Activated naive CD4-positive, alpha-beta T cell treated with anti-CD3 and anti-CD28 coated beads for 36 hours (primary cell): ENCODE measurements at regions of chr12 and their contacts with region 1.

Region 1: DNA sequence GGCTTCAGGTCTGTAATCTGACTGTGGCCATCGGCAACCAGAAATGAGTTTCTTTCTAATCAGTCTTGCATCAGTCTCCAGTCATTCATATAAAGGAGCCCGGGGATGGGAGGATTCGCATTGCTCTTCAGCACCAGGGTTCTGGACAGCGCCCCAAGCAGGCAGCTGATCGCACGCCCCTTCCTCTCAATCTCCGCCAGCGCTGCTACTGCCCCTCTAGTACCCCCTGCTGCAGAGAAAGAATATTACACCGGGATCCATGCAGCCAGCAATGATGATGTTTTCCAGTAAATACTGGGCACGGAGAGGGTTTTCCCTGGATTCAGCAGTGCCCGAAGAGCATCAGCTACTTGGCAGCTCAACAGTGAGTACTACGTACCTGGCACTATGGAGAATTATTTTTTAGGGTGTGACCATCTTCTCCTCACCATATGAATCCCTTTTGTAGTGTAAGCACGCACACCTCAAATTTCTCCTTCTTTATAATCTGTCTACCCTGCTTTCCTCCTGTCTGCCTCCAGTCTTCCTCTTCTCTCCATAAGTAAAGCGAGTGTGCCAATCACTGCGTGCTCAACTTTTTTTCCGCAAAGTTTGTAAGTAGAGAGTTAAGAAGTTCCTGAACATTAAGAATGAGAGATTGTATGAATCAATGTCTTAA is at the start of gene TPH2:
- DNase-seq: peak; percentile 70
- H3K4me3 Mint-ChIP-seq: no peak within 1 kb of the TSS
- H3K27ac Mint-ChIP-seq: no peak within 1 kb of the TSS
- H3K4me1 Mint-ChIP-seq: peaks cover 4% of the 10 kb centered on the region
- H3K27me3 Mint-ChIP-seq: peaks cover 41% of the 10 kb centered on the region
- total RNA-seq, gene TPH2: not detected

Region 2: GRCh38 chr12:71415336-71416231 is 523.3 kb before region 1 on chr12:
- CTCF ChIA-PET with region 1: no interaction called
- intact Hi-C with region 1: loop called (anchors 5 kb)
- DNase-seq: peak; percentile 46
- H3K4me3 Mint-ChIP-seq: no peak overlapping the region
- H3K27ac Mint-ChIP-seq: no peak overlapping the region
- H3K4me1 Mint-ChIP-seq: no peaks in the 10 kb centered on the region
- H3K27me3 Mint-ChIP-seq: peaks cover 8% of the 10 kb centered on the region

Region 3: GRCh38 chr12:71685914-71686665 is 252.8 kb before region 1 on chr12 and contains the start of gene TMEM19:
- CTCF ChIA-PET with region 1: no interaction called
- intact Hi-C with region 1: loop called (anchors 5 kb)
- DNase-seq: peak; percentile 81
- H3K4me3 Mint-ChIP-seq: peak within 1 kb of the TSS; percentile 98
- H3K27ac Mint-ChIP-seq: peak within 1 kb of the TSS; percentile 96
- H3K4me1 Mint-ChIP-seq: peaks cover 27% of the 10 kb centered on the region
- H3K27me3 Mint-ChIP-seq: no peaks in the 10 kb centered on the region
- total RNA-seq, gene TMEM19: 10.9 to 11.1 TPM

Region 4: DNA sequence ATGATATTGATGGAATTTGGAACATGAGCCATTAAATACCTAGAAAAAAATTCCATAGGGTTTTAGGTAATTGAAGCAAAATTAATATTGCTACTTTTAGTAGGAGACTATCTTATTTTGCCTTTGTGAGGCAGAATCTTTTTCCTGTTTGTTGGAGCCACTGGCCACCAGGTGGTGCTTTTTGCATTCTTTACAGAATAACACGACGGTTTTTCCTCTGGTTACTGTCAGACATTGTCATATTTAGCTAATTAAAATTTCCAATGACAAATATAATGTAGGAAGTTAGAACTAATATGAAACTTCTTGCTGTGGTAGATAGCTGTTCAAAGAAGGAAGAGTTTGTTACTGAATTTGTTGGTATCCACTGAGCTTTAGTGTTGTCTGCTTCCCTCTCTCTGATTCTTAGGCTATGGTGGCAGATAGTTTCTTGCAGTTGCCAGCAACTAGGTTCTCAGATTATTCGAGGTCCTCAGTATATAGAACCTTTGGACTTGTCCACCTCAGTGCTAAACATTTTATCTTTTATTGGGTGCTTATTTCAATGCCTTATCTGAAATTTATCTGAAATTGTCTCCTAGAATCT is 158.5 kb before region 1 on chr12:
- CTCF ChIA-PET with region 1: interaction called, 10 read pairs
- intact Hi-C with region 1: loop called (anchors 1 kb)
- DNase-seq: peak; percentile 63
- H3K4me3 Mint-ChIP-seq: no peak overlapping the region
- H3K27ac Mint-ChIP-seq: peak overlapping the region; percentile 47
- H3K4me1 Mint-ChIP-seq: peaks cover 5% of the 10 kb centered on the region
- H3K27me3 Mint-ChIP-seq: no peaks in the 10 kb centered on the region

Region 5: DNA sequence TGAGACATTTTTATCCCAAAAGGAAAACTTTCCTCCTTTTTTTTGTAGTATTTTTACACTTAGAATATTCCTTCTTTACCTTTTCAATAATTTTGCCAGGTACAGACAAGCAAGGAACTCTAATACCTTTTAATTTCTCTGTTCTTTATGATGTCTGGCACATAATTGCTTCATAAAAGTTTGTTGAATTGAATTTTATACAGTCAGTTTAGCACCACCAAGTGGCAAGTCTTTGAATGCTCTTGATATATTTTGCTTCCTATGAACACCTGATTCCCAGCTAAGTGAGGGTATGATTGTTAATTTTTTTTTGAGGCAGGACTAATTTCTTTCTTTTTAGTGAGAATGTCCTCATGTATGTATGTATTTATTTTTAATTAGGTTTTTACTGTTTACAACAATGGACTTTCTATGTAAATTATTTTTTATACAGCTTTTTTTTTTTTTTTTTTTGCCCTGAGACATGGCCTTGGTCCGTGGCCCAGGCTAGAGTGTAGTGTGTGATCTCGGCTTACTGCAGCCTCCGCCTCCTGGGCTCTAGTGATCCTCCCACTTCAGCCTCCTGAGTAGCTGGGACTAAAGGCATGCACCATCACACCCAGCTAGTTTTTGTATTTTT is 92.4 kb before region 1 on chr12:
- CTCF ChIA-PET with region 1: no interaction called
- intact Hi-C with region 1: loop called (anchors 1 kb)
- DNase-seq: no peak
- H3K4me3 Mint-ChIP-seq: no peak overlapping the region
- H3K27ac Mint-ChIP-seq: no peak overlapping the region
- H3K4me1 Mint-ChIP-seq: peaks cover 39% of the 10 kb centered on the region
- H3K27me3 Mint-ChIP-seq: no peaks in the 10 kb centered on the region